ENCODE measurements at regions of chr10 and their contacts with region 1.

Region 1: GRCh38 chr10:10677479-10677878 is 340.2 kb upstream of the CELF2 start:
- DNase-seq: peak; percentile 55 to 72 (median 67)
- ATAC-seq: peak; percentile 42 to 92 (median 88)
- H3K4me3 ChIP-seq: no peak overlapping the region
- H3K27ac ChIP-seq: no peak overlapping the region
- H3K4me1 ChIP-seq: no peaks in the 10 kb centered on the region
- H3K27me3 ChIP-seq: no peaks in the 10 kb centered on the region
- CTCF ChIP-seq: peak; percentile 46 to 73 (median 64)
- POLR2A ChIP-seq: no peak

Region 2: DNA sequence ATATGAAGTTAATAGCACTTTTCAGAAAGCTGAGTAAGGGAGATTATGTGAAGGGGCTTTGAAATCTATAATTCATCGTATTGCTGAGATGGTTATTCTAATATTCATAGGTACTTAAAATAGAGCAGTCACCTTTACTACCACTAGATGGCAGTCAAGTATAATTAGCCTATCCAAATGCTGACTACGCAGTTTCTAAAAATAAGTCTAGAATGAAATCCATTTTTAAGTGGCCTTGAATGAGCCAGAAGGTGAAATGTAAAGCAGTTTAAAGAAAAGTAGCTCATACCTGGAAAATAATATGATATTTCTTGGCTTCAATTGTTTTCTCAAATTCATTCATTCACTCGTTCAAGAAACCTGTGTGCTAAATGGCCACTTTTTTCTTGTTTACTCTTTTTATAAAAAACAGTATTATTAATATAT is 1345.9 kb before region 1 on chr10:
- intact Hi-C with region 1: loop called in 2 of 10 experiments (anchors 10 kb)
- DNase-seq: no peak
- ATAC-seq: peak in 3 of 4 donors; percentile 47 to 57 (median 49)
- H3K4me3 ChIP-seq: no peak overlapping the region
- H3K27ac ChIP-seq: no peak overlapping the region
- H3K4me1 ChIP-seq: no peaks in the 10 kb centered on the region
- H3K27me3 ChIP-seq: peaks cover 0 to 8% (median 0%) of the 10 kb centered on the region in 9 donors
- CTCF ChIP-seq: peak; percentile 71 to 88 (median 83)
- POLR2A ChIP-seq: no peak

Region 3: GRCh38 chr10:9342885-9343570 is 1334.5 kb before region 1 on chr10:
- intact Hi-C with region 1: loop called in 3 of 10 experiments (anchors 5 to 10 kb)
- DNase-seq: no peak
- ATAC-seq: peak in 2 of 4 donors; percentile 41 to 50
- H3K4me3 ChIP-seq: no peak overlapping the region
- H3K27ac ChIP-seq: no peak overlapping the region
- H3K4me1 ChIP-seq: no peaks in the 10 kb centered on the region
- H3K27me3 ChIP-seq: peaks cover 0 to 4% (median 0%) of the 10 kb centered on the region in 9 donors
- CTCF ChIP-seq: peak; percentile 33 to 71 (median 59)
- POLR2A ChIP-seq: no peak

Region 4: DNA sequence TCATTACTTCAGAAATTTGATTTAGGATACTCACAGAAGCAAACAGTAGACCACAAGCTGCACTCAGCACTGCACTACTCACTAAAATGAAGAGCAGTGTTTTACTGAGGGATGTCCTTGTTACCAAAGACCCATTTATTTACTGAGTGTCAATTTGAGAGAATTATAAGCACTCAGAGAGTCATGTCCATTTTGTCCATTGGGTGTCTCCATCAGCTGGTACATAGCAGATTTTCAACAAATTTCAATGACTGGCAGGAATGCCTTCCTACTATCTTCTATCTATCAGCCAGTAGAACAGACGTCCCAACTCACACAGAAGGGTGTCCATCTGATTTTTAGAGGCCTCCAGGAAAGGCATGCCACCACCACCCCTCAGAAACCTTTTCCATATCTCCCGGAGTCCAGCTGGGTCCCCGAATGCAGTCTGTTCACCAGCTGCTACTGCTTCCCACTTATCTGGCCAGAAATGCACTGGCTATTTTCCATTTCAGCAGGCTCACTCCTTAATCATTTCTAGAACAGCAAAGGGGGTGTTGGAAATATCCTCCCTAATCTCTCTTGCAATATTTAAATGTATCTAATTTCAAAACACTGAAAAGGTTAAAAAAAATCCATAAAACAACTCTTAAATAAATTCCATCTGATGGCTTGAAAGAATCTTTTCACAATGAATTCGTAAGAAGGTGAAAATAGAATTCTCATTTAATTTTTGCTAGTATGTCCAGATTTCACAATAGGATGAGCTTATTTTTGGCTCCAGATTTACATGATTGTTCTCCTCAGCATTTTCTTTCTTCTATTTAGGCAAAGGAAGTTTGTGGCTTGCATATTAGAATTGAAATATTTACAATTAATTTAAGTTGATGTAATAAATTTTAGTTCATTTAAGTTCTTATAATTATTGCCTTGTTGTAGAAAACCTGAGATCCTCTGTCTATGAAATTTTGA is 823.8 kb before region 1 on chr10:
- intact Hi-C with region 1: loop called in 1 of 10 experiments (anchors 10 kb)
- DNase-seq: peak in 2 of 5 donors; percentile 9 to 42
- ATAC-seq: peak; percentile 42 to 90 (median 59)
- H3K4me3 ChIP-seq: peak overlapping the region in 1 of 12 donors; percentile 11
- H3K27ac ChIP-seq: no peak overlapping the region
- H3K4me1 ChIP-seq: peaks cover 0 to 8% (median 0%) of the 10 kb centered on the region in 12 donors
- H3K27me3 ChIP-seq: no peaks in the 10 kb centered on the region
- CTCF ChIP-seq: peak in 5 of 12 donors; percentile 9 to 30 (median 27)
- POLR2A ChIP-seq: no peak

Region 5: DNA sequence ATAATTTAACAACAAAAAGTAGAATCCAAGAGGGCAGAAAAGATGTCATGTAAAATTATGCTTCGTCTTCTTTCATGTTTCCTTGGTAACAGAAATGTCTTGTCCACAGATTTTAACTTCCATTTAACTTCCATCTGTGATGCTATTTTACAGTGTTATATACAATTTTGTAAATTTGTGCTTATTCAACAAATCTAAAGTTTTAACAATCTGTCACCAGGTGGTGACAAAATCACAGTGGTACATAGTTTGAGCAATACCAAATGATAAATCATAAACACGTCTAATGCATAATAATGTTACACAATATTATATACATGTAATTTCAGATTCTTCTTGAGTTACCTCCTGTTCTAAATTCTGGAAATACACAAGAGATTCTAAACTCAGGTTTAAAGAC is 444.2 kb before region 1 on chr10:
- intact Hi-C with region 1: loop called in 9 of 10 experiments (anchors 1 to 10 kb)
- DNase-seq: no peak
- ATAC-seq: no peak
- H3K4me3 ChIP-seq: no peak overlapping the region
- H3K27ac ChIP-seq: no peak overlapping the region
- H3K4me1 ChIP-seq: no peaks in the 10 kb centered on the region
- H3K27me3 ChIP-seq: no peaks in the 10 kb centered on the region
- CTCF ChIP-seq: peak in 10 of 12 donors; percentile 7 to 56 (median 28)
- POLR2A ChIP-seq: no peak

Region 6: DNA sequence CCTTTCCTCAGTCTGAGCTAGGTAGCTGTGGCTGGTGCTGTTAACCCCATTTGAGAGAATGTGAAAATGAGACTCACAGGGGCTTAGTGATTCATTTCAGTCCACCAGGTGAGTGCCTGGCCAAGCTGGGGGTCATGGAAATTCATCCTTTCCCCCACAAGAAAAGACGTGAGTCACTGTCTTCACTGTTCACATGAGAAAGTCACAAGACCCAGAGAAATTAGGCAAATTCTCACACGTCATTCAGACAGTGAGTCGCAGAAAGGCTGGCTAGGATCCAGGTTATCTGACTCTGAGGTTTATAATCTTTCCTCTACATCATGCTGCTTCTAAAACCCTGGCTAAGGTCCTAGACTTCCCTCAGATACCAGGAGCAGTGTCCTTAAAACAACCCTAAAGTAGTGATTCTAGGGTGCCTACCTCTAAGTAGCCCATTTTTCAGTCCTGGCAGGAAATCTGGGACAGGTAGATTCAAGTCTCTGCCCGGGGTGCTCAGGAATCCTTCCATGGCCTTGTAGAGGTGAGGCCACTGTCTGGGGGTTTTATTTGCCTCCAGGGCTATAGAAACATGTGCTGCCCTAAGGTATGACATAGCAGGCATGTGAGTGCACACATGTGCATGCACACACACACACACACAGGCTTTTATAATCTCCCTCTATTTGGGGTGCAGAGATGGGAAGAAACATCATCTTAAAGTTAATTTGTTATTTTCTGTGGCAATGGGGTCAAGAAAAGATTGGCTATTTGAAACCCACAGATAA is 87.8 kb before region 1 on chr10:
- intact Hi-C with region 1: no loop called
- DNase-seq: peak in 3 of 5 donors; percentile 23 to 41 (median 40)
- ATAC-seq: peak in 3 of 4 donors; percentile 46 to 79 (median 68)
- H3K4me3 ChIP-seq: no peak overlapping the region
- H3K27ac ChIP-seq: peak overlapping the region in 1 of 12 donors; percentile 2
- H3K4me1 ChIP-seq: peaks cover 0 to 30% (median 7%) of the 10 kb centered on the region in 12 donors
- H3K27me3 ChIP-seq: no peaks in the 10 kb centered on the region
- CTCF ChIP-seq: no peak
- POLR2A ChIP-seq: no peak

Region 7: DNA sequence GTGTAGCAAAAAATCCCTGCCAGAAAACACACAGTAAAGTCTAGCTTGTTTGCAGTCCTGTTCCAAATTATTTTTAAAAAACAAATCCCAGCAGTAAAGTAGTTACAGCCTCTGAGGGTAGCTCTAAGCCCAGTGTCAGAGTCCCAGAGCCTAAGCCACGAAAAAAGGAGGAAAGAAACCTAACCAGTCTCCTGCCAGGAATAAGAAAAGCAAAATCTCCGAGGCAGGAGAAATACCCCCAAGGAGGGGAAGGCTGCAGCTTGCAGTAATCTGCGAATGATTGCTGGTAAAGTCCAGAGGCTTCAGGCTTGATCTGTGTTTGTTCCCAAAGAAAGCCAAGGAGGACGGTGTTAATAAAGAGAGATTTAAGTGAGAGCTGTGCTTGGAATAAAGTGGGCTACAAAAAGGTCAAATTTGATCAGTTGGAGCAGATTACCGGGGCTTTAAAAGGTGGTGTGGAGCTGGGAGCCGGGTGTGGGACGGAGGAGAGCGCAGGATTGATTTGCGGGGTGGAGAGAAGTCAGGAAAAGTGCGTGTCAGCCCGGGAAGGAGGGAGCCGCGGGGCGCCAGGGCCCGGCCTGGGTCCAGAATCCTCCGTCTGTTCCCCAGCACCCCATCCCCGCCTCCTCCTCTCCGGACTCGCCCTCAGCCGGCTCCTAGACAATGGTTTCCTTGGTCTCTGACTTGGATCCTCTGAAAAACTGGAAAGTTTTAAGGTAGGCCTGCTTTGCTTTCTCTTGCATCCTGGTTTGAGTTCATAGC is 120.8 kb after region 1 on chr10:
- intact Hi-C with region 1: no loop called
- DNase-seq: peak in 1 of 5 donors; percentile 26
- ATAC-seq: peak; percentile 37 to 69 (median 50)
- H3K4me3 ChIP-seq: peak overlapping the region in 11 of 12 donors; percentile 6 to 53 (median 34)
- H3K27ac ChIP-seq: peak overlapping the region; percentile 67 to 91 (median 81)
- H3K4me1 ChIP-seq: peaks cover 0 to 65% (median 30%) of the 10 kb centered on the region in 12 donors
- H3K27me3 ChIP-seq: no peaks in the 10 kb centered on the region
- CTCF ChIP-seq: peak in 2 of 12 donors; percentile 5 to 19
- POLR2A ChIP-seq: no peak

Region 8: DNA sequence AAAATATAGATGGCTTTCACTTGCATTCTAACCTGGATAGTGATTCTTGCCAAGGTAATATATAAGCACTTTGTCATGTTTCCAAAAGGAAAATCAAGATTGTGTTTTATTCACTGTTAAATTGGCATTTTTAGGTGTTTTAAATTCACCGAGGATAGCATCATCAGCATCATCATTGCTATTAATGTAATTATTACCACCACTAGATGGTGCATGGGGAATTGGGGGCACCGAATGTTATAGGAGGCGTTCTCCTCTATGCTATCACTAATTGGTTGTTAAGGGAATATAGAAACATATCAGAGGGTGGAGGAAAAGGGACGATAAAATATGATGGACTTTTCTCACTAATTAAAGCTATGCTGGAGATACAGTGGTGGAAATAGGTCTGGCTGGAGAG is 435.7 kb after region 1 on chr10:
- intact Hi-C with region 1: loop called in 1 of 10 experiments (anchors 2 kb)
- DNase-seq: no peak
- ATAC-seq: no peak
- H3K4me3 ChIP-seq: no peak overlapping the region
- H3K27ac ChIP-seq: peak overlapping the region in 3 of 12 donors; percentile 35 to 81 (median 80)
- H3K4me1 ChIP-seq: peaks cover 6 to 75% (median 31%) of the 10 kb centered on the region in 12 donors
- H3K27me3 ChIP-seq: no peaks in the 10 kb centered on the region
- CTCF ChIP-seq: peak in 8 of 12 donors; percentile 20 to 48 (median 33)
- POLR2A ChIP-seq: no peak